ENCODE measurements at regions of chr3 and their contacts with region 1.

Region 1: GRCh38 chr3:64954995-64955636 is 267.3 kb upstream of the ADAMTS9 start:
- DNase-seq: peak; percentile 23
- H3K4me3 Mint-ChIP-seq: no peak overlapping the region
- H3K27ac Mint-ChIP-seq: no peak overlapping the region
- H3K4me1 Mint-ChIP-seq: peaks cover 9% of the 10 kb centered on the region
- H3K27me3 Mint-ChIP-seq: no peaks in the 10 kb centered on the region
- CTCF ChIP-seq: no peak

Region 2: DNA sequence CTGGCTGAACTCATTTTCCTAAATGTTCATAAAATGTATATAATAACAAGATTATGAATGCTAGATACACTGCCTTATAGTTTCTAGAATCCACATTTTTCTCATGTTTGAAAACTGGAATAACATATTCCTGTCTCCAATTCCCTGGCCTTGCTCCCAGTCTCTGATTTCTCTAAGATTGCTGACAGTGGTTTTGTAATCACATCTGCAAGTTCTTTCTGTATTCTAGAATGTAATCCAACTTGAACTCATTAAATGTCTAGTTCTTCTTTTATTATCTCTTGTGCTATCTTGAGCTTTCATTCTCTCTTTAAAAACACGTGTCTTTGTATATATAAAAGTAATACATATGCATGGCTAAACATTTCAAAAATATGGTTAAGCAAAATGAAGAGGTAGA is 52.1 kb before region 1 on chr3:
- CTCF ChIA-PET with region 1: no interaction called
- intact Hi-C with region 1: no loop called
- DNase-seq: no peak
- H3K4me3 Mint-ChIP-seq: no peak overlapping the region
- H3K27ac Mint-ChIP-seq: no peak overlapping the region
- H3K4me1 Mint-ChIP-seq: peaks cover 22% of the 10 kb centered on the region
- H3K27me3 Mint-ChIP-seq: no peaks in the 10 kb centered on the region
- CTCF ChIP-seq: no peak

Region 3: GRCh38 chr3:65052101-65052500 is 97.0 kb after region 1 on chr3:
- CTCF ChIA-PET with region 1: no interaction called
- intact Hi-C with region 1: loop called (anchors 5 kb)
- DNase-seq: no peak
- H3K4me3 Mint-ChIP-seq: no peak overlapping the region
- H3K27ac Mint-ChIP-seq: no peak overlapping the region
- H3K4me1 Mint-ChIP-seq: no peaks in the 10 kb centered on the region
- H3K27me3 Mint-ChIP-seq: peaks cover 14% of the 10 kb centered on the region
- CTCF ChIP-seq: no peak

Region 4: DNA sequence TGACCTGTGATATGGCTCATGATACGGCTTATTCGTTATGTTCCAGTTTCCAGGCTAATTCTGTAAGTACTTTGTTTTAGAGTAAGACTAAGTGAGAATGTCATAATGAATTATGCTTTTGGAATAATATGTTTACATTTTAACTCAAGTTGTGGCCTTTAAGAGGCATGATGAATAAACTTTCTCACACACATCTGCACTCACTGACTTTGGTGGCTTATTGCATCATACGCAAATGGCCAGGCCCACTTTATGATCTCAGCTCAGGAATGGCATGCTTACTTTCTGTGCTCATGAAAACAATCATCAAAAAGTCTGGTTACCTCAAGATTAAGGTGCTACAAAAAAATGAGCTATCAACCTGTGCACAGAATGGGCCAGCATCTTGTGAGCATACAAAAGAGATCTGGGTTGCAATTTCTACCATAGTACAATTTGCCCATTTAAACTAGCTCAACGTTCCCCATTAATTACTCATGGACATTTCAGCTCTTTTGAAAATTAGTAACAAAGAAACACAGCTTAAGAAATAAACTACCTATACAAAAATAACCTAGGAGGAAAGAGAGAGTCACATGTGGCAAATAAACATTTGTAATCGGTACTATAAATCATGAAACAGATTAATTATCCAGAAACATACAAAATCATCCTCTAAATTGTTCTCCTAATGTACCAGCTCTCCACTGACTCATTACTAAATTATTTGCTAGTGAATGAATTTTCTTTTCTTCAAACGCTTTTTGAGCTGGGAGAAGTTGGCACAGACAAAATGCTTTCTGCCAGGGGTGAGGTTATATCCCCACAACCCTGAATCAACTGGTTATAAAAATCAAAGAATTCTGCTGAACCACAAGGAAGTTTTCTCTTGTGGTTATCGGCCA is 171.7 kb after region 1 on chr3:
- CTCF ChIA-PET with region 1: no interaction called
- intact Hi-C with region 1: no loop called
- DNase-seq: no peak
- H3K4me3 Mint-ChIP-seq: no peak overlapping the region
- H3K27ac Mint-ChIP-seq: no peak overlapping the region
- H3K4me1 Mint-ChIP-seq: peaks cover 8% of the 10 kb centered on the region
- H3K27me3 Mint-ChIP-seq: no peaks in the 10 kb centered on the region
- CTCF ChIP-seq: no peak